Aorta (tissue), 5 donors: ENCODE measurements at regions of chr15 and their contacts with region 1.

Region 1: GRCh38 chr15:48221885-48222284 is 15.8 kb downstream of the SLC12A1 start:
- DNase-seq: peak in 1 of 2 donors; percentile 55
- ATAC-seq: peak; percentile 81
- H3K4me3 ChIP-seq: peak overlapping the region in 1 of 2 donors; percentile 59
- H3K27ac ChIP-seq: peak overlapping the region in 1 of 2 donors; percentile 87
- H3K4me1 ChIP-seq: peaks cover 3 to 32% of the 10 kb centered on the region in 2 donors
- H3K27me3 ChIP-seq: no peaks in the 10 kb centered on the region

Region 2: GRCh38 chr15:48059791-48060190 is 162.1 kb before region 1 on chr15:
- intact Hi-C with region 1: loop called in 1 of 2 experiments (anchors 5 kb)
- DNase-seq: peak; percentile 87
- ATAC-seq: peak; percentile 75
- H3K4me3 ChIP-seq: peak overlapping the region; percentile 3 to 29
- H3K27ac ChIP-seq: peak overlapping the region; percentile 84 to 93
- H3K4me1 ChIP-seq: peaks cover 0 to 7% of the 10 kb centered on the region in 2 donors
- H3K27me3 ChIP-seq: no peaks in the 10 kb centered on the region

Region 3: GRCh38 chr15:48177766-48178647 is 43.9 kb before region 1 on chr15 and contains the start of gene MYEF2:
- intact Hi-C with region 1: loop called in 1 of 2 experiments (anchors 5 kb)
- DNase-seq: peak; percentile 84 to 92
- ATAC-seq: peak; percentile 89
- H3K4me3 ChIP-seq: peak within 1 kb of the TSS; percentile 65 to 88
- H3K27ac ChIP-seq: peak within 1 kb of the TSS; percentile 84 to 88
- H3K4me1 ChIP-seq: no peaks in the 10 kb centered on the region
- H3K27me3 ChIP-seq: no peaks in the 10 kb centered on the region
- total RNA-seq, gene MYEF2: 73.0 to 105 TPM

Region 4: GRCh38 chr15:48414015-48414414 is 192.1 kb after region 1 on chr15:
- intact Hi-C with region 1: loop called in 1 of 2 experiments (anchors 10 kb)
- DNase-seq: no peak
- ATAC-seq: peak; percentile 49
- H3K4me3 ChIP-seq: no peak overlapping the region
- H3K27ac ChIP-seq: peak overlapping the region in 1 of 2 donors; percentile 14
- H3K4me1 ChIP-seq: peaks cover 9 to 12% of the 10 kb centered on the region in 2 donors
- H3K27me3 ChIP-seq: no peaks in the 10 kb centered on the region